Activated CD4-positive, alpha-beta T cell treated with anti-CD3 and anti-CD28 coated beads for 36 hours (primary cell): ENCODE measurements at regions of chr7 and their contacts with region 1.

Region 1: GRCh38 chr7:23546897-23547572 is 15.3 kb upstream of the TRA2A start:
- DNase-seq: peak; percentile 83
- ATAC-seq: peak; percentile 83
- H3K4me3 Mint-ChIP-seq: no peak overlapping the region
- H3K27ac Mint-ChIP-seq: no peak overlapping the region
- H3K4me1 Mint-ChIP-seq: peaks cover 5% of the 10 kb centered on the region
- H3K27me3 Mint-ChIP-seq: peaks cover 2% of the 10 kb centered on the region

Region 2: DNA sequence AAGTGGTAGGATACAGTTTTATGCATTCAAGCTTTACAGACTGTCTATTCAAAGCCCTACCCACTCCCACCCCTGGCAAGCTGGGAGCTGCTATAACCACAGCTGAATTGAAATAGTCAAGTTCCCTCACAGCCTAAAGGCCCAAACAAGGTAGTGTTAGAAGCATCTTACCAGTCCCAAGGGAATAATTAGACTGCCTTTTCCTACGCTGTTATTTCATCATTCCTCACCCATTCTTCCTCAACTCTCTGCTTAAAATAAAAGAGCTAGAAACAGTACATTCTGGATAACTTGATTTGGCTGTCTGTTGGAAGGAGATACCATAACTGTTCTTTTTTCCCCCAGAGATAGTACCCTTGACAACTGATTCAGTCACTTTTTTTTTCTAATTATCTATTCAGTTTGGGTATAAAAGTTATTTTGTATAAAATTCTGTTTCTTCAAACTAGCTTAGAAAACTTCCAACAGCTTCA is 1244.0 kb before region 1 on chr7:
- CTCF ChIA-PET with region 1: no interaction called
- POLR2A ChIA-PET with region 1: no interaction called
- intact Hi-C with region 1: no loop called
- DNase-seq: no peak
- ATAC-seq: no peak
- H3K4me3 Mint-ChIP-seq: no peak overlapping the region
- H3K27ac Mint-ChIP-seq: no peak overlapping the region
- H3K4me1 Mint-ChIP-seq: no peaks in the 10 kb centered on the region
- H3K27me3 Mint-ChIP-seq: peaks cover 5% of the 10 kb centered on the region

Region 3: DNA sequence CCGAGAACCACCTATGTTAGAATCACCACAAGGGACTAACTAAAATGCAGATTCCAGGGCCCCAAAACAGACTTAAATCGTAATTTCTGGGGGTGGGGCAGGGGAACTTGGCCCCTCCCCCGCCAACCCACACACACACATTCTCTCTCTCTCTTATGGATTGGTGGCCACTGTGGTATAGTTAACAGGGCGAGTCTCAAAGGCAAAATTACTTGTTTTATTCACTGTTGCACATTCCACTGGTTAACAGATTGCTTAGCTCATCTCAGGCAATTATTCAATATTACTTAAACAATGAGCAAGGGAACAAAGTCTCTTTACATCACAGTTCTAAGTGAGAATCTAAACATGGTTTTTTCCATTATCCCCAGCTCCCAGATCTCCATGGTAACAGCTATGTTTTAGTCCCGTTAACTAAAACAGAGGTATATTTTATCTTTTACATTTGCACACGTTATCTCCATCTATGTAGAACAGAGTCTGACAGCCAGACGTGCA is 115.3 kb before region 1 on chr7:
- CTCF ChIA-PET with region 1: interaction called, 3 read pairs
- POLR2A ChIA-PET with region 1: no interaction called
- intact Hi-C with region 1: loop called in 1 of 2 experiments (anchors 5 kb)
- DNase-seq: no peak
- ATAC-seq: no peak
- H3K4me3 Mint-ChIP-seq: no peak overlapping the region
- H3K27ac Mint-ChIP-seq: no peak overlapping the region
- H3K4me1 Mint-ChIP-seq: peaks cover 2% of the 10 kb centered on the region
- H3K27me3 Mint-ChIP-seq: peaks cover 25% of the 10 kb centered on the region

Region 4: GRCh38 chr7:23570592-23571200 is 23.7 kb after region 1 on chr7:
- CTCF ChIA-PET with region 1: interaction called, 7 read pairs
- POLR2A ChIA-PET with region 1: no interaction called
- intact Hi-C with region 1: loop called in 1 of 2 experiments (anchors 1 kb)
- DNase-seq: peak; percentile 83
- ATAC-seq: peak; percentile 92
- H3K4me3 Mint-ChIP-seq: no peak overlapping the region
- H3K27ac Mint-ChIP-seq: no peak overlapping the region
- H3K4me1 Mint-ChIP-seq: no peaks in the 10 kb centered on the region
- H3K27me3 Mint-ChIP-seq: peaks cover 4% of the 10 kb centered on the region

Region 5: GRCh38 chr7:23712368-23713284 is 165.6 kb after region 1 on chr7:
- CTCF ChIA-PET with region 1: interaction called, 66 read pairs
- POLR2A ChIA-PET with region 1: no interaction called
- intact Hi-C with region 1: loop called (anchors 1 kb)
- DNase-seq: no peak
- ATAC-seq: peak; percentile 49
- H3K4me3 Mint-ChIP-seq: no peak overlapping the region
- H3K27ac Mint-ChIP-seq: no peak overlapping the region
- H3K4me1 Mint-ChIP-seq: no peaks in the 10 kb centered on the region
- H3K27me3 Mint-ChIP-seq: no peaks in the 10 kb centered on the region